Ascending aorta (tissue), 2 donors: ENCODE measurements at regions of chr5 and their contacts with region 1.

Region 1: DNA sequence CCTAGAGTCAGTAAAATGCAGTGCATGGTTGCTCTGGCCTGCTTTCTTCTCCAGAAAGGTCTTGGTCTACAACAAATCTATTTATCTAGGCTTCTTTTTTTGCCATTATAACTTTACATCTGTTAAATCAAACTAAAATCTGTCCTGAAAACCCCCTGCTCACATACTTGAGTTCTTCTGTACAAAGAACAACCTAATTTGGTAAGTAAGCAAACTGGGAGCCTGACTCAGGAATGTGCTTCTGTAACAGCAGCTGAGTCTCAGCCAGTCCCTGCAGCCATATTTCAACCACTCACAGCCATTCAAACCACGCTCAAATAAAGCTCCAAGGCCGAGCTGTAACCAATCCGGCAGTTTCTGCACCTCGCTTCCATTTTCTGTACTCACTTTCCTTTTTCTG is 95.8 kb downstream of the PLPP1 start:
- DNase-seq: peak in 1 of 2 donors; percentile 77
- H3K4me3 ChIP-seq: no peak overlapping the region
- H3K27ac ChIP-seq: peak overlapping the region; percentile 87 to 92
- H3K4me1 ChIP-seq: peaks cover 14 to 36% of the 10 kb centered on the region in 2 donors
- H3K27me3 ChIP-seq: no peaks in the 10 kb centered on the region
- CTCF ChIP-seq: no peak

Region 2: DNA sequence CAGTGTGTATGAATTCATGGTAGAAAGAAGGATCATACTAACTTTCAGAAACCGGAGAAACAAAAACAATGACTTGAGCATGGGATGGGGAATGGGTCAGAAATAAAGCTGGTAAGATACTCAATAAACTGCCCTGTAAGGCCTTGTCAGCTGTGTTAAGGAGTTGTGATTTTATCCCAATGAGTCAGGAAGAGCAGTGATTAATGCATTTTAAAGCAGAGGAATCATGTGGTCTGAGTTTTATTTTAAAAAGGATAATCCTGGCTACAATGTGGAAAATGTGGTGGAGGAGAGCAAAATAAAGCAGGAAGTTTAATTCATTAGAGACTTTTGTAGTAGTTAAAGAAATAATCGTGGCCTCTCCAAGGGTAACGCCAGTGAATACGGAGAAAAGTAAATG is 160.2 kb before region 1 on chr5:
- intact Hi-C with region 1: no loop called
- DNase-seq: no peak
- H3K4me3 ChIP-seq: no peak overlapping the region
- H3K27ac ChIP-seq: no peak overlapping the region
- H3K4me1 ChIP-seq: no peaks in the 10 kb centered on the region
- H3K27me3 ChIP-seq: no peaks in the 10 kb centered on the region
- CTCF ChIP-seq: no peak

Region 3: GRCh38 chr5:55668356-55668755 is 229.3 kb after region 1 on chr5:
- intact Hi-C with region 1: loop called (anchors 10 kb)
- DNase-seq: no peak
- H3K4me3 ChIP-seq: no peak overlapping the region
- H3K27ac ChIP-seq: peak overlapping the region; percentile 15 to 58
- H3K4me1 ChIP-seq: peaks cover 0 to 10% of the 10 kb centered on the region in 2 donors
- H3K27me3 ChIP-seq: no peaks in the 10 kb centered on the region
- CTCF ChIP-seq: no peak